ENCODE measurements at regions of chr15 and their contacts with region 1.

Region 1: DNA sequence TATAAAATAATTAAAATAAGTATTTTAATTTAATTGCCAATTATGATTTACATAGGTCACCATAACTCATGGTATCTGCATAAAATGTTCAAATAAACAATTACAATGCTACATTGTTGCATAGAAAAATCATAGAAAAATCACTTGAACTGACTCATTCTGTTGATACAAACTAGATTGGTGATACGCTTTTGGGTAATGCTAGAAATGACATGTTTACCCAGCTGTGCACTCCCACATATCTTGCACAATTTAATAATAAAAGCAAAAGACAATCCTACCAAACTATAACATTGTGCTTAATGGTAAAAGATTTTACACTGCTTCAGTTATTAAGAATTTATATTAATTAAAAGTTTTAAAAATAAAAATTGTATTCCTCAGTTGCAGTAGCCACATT is 45.8 kb upstream of the FBXL22 start:
- DNase-seq: no peak
- ATAC-seq: no peak
- H3K4me3 ChIP-seq: no peak overlapping the region
- H3K27ac ChIP-seq: peak overlapping the region; percentile 45; the same call in 1 of the 2 replicates
- H3K4me1 ChIP-seq: peaks cover 39% of the 10 kb centered on the region
- H3K27me3 ChIP-seq: no peaks in the 10 kb centered on the region
- CTCF ChIP-seq: no peak

Region 2: DNA sequence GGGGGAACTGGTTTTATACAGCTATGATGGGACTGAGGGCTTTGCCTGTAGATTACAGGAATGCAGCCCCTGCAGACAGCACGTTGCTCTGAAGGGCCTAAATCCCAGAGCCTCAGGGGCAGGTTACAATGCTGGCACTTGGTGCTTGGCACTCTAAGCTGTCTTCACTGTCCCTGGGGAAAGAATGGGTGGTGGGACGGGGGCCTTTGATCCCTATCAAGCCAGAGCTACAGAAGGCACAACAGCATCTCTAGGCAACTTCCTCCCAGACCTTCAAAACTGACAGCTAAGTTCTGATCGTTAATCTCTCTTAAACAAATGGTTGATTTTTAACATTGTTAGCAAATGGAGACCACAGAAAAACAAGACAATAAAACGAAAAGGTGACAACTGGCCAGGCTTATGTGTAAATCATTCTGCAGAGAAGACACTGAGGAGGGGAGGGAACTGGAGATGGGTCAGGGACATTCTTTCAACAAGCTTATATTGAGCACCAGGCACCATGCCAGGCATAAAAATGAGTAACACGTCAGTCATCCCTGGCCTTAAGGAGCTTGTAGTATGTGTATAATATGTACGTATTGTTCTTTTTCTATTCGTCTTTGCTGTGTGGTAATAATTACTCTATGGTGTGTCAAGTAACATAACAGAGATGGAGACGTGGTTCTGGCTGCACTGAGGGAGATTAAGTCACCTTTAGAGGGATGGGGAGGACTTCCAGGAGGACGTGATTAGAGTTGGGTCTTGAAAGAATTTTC is 218.9 kb before region 1 on chr15:
- CTCF ChIA-PET with region 1: no interaction called
- POLR2A ChIA-PET with region 1: interaction called, 11 read pairs
- in situ Hi-C with region 1: no loop called
- intact Hi-C with region 1: no loop called
- DNase-seq: peak; percentile 54
- ATAC-seq: peak; percentile 56
- H3K4me3 ChIP-seq: no peak overlapping the region
- H3K27ac ChIP-seq: no peak overlapping the region
- H3K4me1 ChIP-seq: no peaks in the 10 kb centered on the region
- H3K27me3 ChIP-seq: no peaks in the 10 kb centered on the region
- CTCF ChIP-seq: no peak

Region 3: GRCh38 chr15:63531586-63531985 is 19.8 kb before region 1 on chr15:
- CTCF ChIA-PET with region 1: no interaction called
- POLR2A ChIA-PET with region 1: no interaction called
- in situ Hi-C with region 1: no loop called
- intact Hi-C with region 1: no loop called
- DNase-seq: no peak
- ATAC-seq: peak; percentile 79; the same call in 1 of the 2 replicates
- H3K4me3 ChIP-seq: no peak overlapping the region
- H3K27ac ChIP-seq: no peak overlapping the region
- H3K4me1 ChIP-seq: peaks cover 3% of the 10 kb centered on the region; the same call in 1 of the 2 replicates
- H3K27me3 ChIP-seq: no peaks in the 10 kb centered on the region
- CTCF ChIP-seq: peak; percentile 63

Region 4: GRCh38 chr15:64146885-64147681 is 595.7 kb after region 1 on chr15:
- CTCF ChIA-PET with region 1: no interaction called
- POLR2A ChIA-PET with region 1: interaction called, 17 read pairs
- in situ Hi-C with region 1: no loop called
- intact Hi-C with region 1: no loop called
- DNase-seq: no peak
- ATAC-seq: no peak
- H3K4me3 ChIP-seq: no peak overlapping the region
- H3K27ac ChIP-seq: no peak overlapping the region
- H3K4me1 ChIP-seq: no peaks in the 10 kb centered on the region
- H3K27me3 ChIP-seq: no peaks in the 10 kb centered on the region
- CTCF ChIP-seq: no peak

Measured in Panc1 (cell line).